Caco-2 (cell line): ENCODE measurements at regions of chr12 and their contacts with region 1.

Region 1: DNA sequence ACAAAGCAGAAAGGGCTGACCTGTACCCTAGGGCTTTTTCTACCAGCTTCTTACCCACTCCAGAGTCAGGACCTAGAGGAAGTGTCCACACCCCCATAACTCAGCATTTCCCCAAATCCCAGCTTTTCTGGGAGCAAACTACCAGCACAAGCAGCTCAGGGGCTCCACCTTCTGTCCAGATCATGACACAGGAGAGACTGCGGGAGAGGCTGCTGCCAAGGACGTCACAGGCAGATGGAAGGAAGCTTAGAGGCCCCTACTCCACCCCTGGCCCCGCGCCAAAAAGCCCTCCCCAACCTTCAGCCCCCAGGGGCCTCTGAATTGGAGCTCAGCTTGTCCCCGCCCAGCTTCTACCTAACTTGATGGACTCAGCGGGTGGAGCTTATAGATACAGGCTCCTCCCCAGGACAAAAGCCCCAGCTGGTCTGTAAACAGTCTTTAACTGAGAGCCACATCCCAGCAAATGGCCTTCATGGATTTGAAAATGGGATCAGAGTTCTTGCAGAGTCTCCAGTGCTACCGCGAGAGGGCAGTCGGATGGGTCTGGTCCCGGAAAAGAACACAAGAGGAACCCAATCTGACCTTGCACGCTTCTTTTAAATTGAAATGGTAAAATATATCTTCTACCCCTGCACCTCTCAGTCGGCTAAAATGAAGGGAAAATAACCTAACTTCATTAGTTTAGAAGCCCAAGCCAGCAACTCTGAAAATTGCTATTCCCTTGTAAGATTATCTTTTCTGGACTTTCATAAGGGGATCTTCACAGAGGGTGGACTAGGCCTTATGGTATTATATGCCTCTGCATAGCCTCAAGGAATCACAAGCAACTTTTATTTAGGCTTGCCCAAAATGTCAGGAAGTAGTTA is 6.8 kb upstream of the BAZ2A start:
- DNase-seq: peak; percentile 98 to 99
- H3K4me3 ChIP-seq: peak overlapping the region; percentile 85
- H3K4me3 Mint-ChIP-seq: peak overlapping the region; percentile 98
- H3K27ac Mint-ChIP-seq: peak overlapping the region; percentile 92
- H3K4me1 ChIP-seq: peaks cover 23% of the 10 kb centered on the region
- H3K4me1 Mint-ChIP-seq: peaks cover 6% of the 10 kb centered on the region
- H3K27me3 ChIP-seq: no peaks in the 10 kb centered on the region
- H3K27me3 Mint-ChIP-seq: no peaks in the 10 kb centered on the region
- CTCF ChIP-seq: peak; percentile 57 to 80

Region 2: DNA sequence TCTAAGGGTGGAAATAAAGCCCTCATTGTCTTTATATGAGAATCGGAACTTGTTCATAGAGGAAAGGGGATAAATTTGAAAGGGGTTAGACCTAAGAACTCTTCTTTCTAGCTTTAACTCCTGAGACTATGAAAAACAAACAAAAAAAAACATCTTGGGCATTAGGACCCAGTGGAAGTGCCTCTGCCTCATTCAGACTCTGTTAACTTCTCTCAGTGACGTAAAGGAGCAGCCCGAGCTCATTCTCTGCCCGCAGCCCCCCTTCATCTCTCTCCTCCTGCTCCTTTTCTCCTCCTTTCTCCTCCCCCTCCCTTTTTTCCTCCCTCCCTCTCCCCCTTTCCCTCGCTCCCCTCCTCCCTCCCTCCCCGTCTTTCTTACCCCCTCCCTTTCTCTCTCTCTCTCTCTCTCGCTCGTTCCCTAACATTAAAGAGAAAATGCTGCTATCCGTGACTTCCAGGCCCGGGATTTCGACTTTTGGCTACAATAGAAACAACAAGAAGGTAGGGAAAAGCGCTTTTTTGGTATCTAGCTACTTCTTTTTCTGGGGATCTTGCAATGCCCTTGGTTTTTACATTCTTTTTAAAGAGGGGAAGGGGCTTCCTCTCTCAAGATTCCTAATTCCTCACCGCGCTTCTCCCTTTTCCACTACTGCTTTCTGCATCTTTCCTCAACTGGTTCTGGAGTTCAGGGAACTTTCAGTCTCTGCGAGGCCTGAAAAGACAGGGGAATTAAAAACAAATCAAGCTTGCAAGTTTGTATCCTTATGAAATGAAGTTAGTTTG is 115.1 kb before region 1 on chr12 and contains the start of gene RBMS2:
- CTCF ChIA-PET with region 1: interaction called, 21 read pairs
- POLR2A ChIA-PET with region 1: interaction called, 5 read pairs
- intact Hi-C with region 1: loop called (anchors 2 kb)
- DNase-seq: peak; percentile 83 to 92
- H3K4me3 ChIP-seq: peak within 1 kb of the TSS; percentile 59
- H3K4me3 Mint-ChIP-seq: peak within 1 kb of the TSS; percentile 82
- H3K27ac Mint-ChIP-seq: peak within 1 kb of the TSS; percentile 23
- H3K4me1 ChIP-seq: peaks cover 19% of the 10 kb centered on the region
- H3K4me1 Mint-ChIP-seq: peaks cover 6% of the 10 kb centered on the region
- H3K27me3 ChIP-seq: no peaks in the 10 kb centered on the region
- H3K27me3 Mint-ChIP-seq: no peaks in the 10 kb centered on the region
- CTCF ChIP-seq: no peak
- total RNA-seq, gene RBMS2: 32.5 and 39.5 TPM in 2 replicates

Region 3: DNA sequence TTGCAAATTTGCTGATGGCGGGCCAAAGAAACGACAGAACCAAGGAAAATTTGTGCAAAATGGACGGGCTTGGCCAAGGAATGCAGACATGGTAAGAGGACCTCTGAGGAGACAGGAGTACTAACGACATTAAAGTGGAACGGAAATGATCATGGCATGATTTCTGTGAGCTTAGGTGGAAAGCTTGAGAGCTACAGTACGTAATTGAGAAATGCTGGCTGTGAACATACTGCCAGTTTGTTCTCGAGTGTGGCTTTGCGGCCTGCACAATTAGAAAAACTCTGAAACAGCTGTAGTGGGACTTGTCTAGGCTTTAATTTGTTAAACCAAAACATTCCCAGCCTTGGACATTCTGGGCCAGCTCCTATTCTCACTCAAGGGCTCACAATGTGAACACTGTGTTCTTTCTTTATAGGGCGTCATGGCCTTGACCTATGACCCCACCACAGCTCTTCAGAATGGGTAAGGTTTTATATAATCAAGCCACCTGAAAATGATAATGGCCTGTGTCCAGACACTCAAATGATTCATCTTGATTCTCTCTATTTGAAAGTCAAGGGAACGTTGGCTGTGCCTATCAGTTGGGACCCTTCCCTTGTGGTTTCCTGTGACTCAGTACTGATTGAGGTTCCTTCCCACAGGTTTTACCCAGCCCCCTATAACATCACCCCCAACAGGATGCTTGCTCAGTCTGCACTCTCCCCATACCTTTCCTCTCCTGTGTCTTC is 55.3 kb before region 1 on chr12:
- CTCF ChIA-PET with region 1: no interaction called
- POLR2A ChIA-PET with region 1: no interaction called
- intact Hi-C with region 1: no loop called
- DNase-seq: no peak
- H3K4me3 ChIP-seq: no peak overlapping the region
- H3K4me3 Mint-ChIP-seq: no peak overlapping the region
- H3K27ac Mint-ChIP-seq: no peak overlapping the region
- H3K4me1 ChIP-seq: no peaks in the 10 kb centered on the region
- H3K4me1 Mint-ChIP-seq: no peaks in the 10 kb centered on the region
- H3K27me3 ChIP-seq: no peaks in the 10 kb centered on the region
- H3K27me3 Mint-ChIP-seq: no peaks in the 10 kb centered on the region
- CTCF ChIP-seq: no peak

Region 4: DNA sequence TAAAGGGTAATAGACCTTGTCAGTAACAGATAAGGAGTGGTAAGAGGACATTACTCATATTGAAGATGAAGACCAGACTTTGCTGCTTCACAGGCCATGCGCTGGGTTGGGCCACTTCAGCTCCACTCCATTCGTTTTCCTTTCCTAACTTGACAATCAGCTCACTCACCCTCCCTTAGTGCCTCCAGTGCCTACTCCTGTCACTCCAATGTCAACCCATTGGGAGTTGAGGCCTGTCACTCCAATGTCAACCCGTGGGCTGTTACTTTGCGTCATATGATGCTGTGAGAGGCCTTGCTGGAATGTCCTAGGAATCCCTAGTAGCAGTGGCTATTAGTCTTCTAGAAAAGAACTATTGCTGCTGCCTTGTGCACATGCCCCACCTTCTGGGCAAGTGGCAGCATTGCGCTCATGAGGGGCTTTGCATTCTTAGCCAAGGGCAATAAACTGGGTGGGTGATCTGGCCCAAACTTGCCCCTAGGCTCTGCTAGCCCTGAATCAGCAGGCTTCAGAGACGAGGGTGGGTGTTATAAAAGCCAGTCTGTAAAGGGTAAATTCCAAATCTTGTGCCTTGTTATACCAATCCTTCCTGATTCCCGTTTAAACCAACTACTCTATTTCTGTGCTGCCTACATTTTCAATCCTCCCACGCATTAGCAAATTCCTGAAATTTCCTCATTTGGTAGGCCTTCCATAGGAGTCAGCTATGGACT is 42.8 kb before region 1 on chr12:
- CTCF ChIA-PET with region 1: interaction called, 15 read pairs
- POLR2A ChIA-PET with region 1: interaction called, 3 read pairs
- intact Hi-C with region 1: loop called (anchors 2 kb)
- DNase-seq: peak; percentile 76 to 82
- H3K4me3 ChIP-seq: no peak overlapping the region
- H3K4me3 Mint-ChIP-seq: no peak overlapping the region
- H3K27ac Mint-ChIP-seq: peak overlapping the region; percentile 81
- H3K4me1 ChIP-seq: peaks cover 6% of the 10 kb centered on the region; the same call in 1 of the 2 replicates
- H3K4me1 Mint-ChIP-seq: peaks cover 14% of the 10 kb centered on the region
- H3K27me3 ChIP-seq: no peaks in the 10 kb centered on the region
- H3K27me3 Mint-ChIP-seq: no peaks in the 10 kb centered on the region
- CTCF ChIP-seq: peak; percentile 84 to 85

Region 5: DNA sequence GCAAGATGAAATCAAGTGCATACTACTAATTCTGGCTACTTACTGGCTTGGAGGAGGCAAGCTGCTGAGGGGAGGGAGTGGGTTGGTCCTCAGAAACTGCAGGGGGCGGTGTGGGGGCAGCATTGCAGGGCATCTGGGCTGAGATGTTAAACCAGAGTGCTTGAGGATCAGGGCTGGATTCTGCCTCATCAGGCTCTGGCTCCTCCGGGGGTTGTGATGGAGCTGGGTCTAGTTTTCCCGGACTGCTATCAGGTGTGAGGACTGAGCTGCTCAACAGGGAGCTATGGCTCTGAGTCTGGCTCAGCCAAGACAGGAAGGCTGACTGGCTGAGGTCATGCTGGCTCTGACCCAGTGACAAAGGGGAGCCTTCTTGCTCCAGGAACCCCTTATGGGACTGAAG is 35.4 kb before region 1 on chr12:
- CTCF ChIA-PET with region 1: interaction called, 21 read pairs
- POLR2A ChIA-PET with region 1: interaction called, 3 read pairs
- intact Hi-C with region 1: no loop called
- DNase-seq: peak; percentile 50 to 53
- H3K4me3 ChIP-seq: no peak overlapping the region
- H3K4me3 Mint-ChIP-seq: no peak overlapping the region
- H3K27ac Mint-ChIP-seq: no peak overlapping the region
- H3K4me1 ChIP-seq: no peaks in the 10 kb centered on the region
- H3K4me1 Mint-ChIP-seq: no peaks in the 10 kb centered on the region
- H3K27me3 ChIP-seq: no peaks in the 10 kb centered on the region
- H3K27me3 Mint-ChIP-seq: no peaks in the 10 kb centered on the region
- CTCF ChIP-seq: peak in 1 of 2 experiments; percentile 32

Region 6: DNA sequence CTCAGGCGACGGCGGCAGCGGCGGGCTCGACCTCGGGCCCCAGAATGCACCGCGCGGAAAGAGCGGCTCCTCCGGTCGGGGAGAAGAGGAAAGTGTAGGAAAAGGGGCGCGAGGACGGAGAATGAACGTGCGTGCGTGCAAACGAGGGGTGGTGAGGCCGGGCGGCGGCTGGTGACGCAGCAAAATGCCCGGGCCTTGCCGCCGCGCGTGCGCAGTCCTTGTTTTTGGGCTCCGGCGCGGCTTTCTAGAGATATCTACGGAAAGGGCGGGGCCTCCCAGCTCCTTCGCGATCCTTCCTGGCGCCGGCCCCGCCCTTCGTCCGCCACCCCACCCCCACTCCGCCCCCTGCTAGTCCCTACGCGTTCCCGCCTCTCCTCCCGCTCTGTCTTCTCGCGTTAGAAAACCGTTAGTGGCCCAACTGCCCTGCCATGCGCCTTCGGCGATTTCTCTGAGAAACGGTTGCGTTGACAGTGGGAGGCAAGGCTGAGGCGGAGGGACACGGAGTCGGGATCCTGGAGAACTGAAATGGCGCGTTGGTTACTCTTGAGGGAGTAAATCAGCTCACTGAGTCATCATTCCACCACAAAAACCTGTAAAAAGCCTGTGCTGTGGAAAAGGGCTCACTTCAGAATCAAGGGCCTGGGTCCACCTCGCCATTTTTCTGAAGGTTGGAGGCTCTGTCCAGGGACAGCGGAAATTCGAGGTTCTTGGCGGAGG is 51.4 kb after region 1 on chr12 and contains the start of gene PTGES3:
- CTCF ChIA-PET with region 1: interaction called, 21 read pairs
- POLR2A ChIA-PET with region 1: interaction called, 43 read pairs
- intact Hi-C with region 1: loop called (anchors 2 kb)
- DNase-seq: peak; percentile 98
- H3K4me3 ChIP-seq: peak within 1 kb of the TSS; percentile 68
- H3K4me3 Mint-ChIP-seq: peak within 1 kb of the TSS; percentile 87
- H3K27ac Mint-ChIP-seq: peak within 1 kb of the TSS; percentile 92
- H3K4me1 ChIP-seq: no peaks in the 10 kb centered on the region
- H3K4me1 Mint-ChIP-seq: no peaks in the 10 kb centered on the region
- H3K27me3 ChIP-seq: no peaks in the 10 kb centered on the region
- H3K27me3 Mint-ChIP-seq: no peaks in the 10 kb centered on the region
- CTCF ChIP-seq: no peak
- total RNA-seq, gene PTGES3: 241 and 242 TPM in 2 replicates

Region 7: DNA sequence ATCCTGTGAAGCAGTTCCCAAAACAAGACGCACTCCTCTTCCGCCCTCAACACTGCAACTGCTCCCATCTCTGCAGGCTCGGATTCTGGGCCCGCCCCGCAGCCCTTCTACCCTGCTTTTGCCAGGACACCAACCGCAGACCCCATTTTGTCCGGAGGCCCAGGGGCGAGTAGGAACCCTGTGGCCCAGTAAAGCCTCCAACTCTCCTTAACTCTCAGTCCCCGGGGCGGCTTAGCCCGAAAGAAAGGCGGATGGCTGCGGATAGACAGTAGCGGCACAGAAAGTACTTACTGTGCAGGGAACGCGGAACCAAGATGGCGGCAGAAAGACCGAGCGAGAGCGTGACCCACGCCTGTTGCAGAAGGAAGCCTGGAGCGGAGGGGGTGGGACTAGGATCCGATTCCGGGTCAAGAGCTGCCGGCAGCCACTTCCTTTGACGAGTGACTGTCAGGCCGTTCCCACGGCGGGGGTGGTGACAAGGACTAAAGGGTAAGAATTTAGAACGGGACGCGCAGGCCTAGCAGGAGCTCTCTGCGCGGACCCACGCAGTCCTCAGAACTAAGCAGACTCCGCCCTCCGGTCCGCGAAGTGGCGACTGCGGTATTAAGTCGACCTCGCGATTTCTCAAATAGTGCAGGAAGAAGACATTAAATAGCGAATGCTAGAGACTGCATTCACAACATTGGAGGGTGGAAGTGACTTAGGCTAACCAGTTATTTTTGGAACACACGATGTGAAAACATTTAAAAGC is 88.2 kb after region 1 on chr12 and contains the start of gene NACA:
- CTCF ChIA-PET with region 1: interaction called, 13 read pairs
- POLR2A ChIA-PET with region 1: interaction called, 16 read pairs
- intact Hi-C with region 1: loop called (anchors 5 kb)
- DNase-seq: peak; percentile 98 to 99
- H3K4me3 ChIP-seq: peak within 1 kb of the TSS; percentile 68
- H3K4me3 Mint-ChIP-seq: peak within 1 kb of the TSS; percentile 99
- H3K27ac Mint-ChIP-seq: peak within 1 kb of the TSS; percentile 99
- H3K4me1 ChIP-seq: peaks cover 29% of the 10 kb centered on the region
- H3K4me1 Mint-ChIP-seq: peaks cover 31% of the 10 kb centered on the region
- H3K27me3 ChIP-seq: no peaks in the 10 kb centered on the region
- H3K27me3 Mint-ChIP-seq: no peaks in the 10 kb centered on the region
- CTCF ChIP-seq: no peak
- total RNA-seq, gene NACA: 784 and 804 TPM in 2 replicates